CD14-positive monocyte (primary cell): ENCODE measurements at regions of chr4 and their contacts with region 1.

Region 1: GRCh38 chr4:86043755-86044592 is 315.9 kb downstream of the MAPK10 start:
- DNase-seq: peak; percentile 10 to 30 (median 23)
- H3K4me3 ChIP-seq: no peak overlapping the region
- H3K4me3 Mint-ChIP-seq: no peak overlapping the region
- H3K27ac ChIP-seq: no peak overlapping the region
- H3K27ac Mint-ChIP-seq: no peak overlapping the region
- H3K4me1 ChIP-seq: no peaks in the 10 kb centered on the region
- H3K4me1 Mint-ChIP-seq: no peaks in the 10 kb centered on the region
- H3K27me3 ChIP-seq: no peaks in the 10 kb centered on the region
- H3K27me3 Mint-ChIP-seq: no peaks in the 10 kb centered on the region
- CTCF ChIP-seq: peak; percentile 82

Region 2: DNA sequence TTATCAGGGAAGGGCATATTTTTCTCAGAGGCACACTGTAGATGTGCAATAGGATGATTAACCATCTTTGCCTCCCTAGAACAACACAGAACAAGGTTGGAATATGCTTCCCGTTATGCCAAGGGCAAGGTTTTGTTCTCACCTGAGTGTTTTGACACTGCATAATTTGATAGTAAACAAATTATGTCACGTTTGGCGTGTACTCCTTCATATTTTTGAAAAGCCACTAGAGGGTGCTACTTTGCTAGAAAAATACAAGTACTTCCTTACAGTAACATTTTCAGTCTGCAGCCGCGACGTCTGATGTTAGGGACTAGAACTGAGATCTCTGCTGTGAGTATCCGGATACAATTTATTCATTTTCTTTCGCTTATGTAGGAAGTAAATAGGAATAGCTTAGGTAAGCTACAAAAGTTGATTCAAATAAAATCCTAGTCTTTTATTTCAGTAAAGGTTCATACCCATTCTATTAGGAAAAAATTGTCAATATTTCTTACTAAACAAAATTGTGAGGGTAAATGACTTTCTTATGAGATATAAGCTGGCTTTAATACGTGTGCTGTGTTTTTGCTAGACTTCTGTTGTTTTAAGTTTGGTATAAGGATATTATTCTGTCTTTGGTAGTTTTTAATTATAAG is 896.4 kb before region 1 on chr4:
- intact Hi-C with region 1: loop called (anchors 10 kb)
- DNase-seq: peak; percentile 24 to 53 (median 43)
- H3K4me3 ChIP-seq: no peak overlapping the region
- H3K4me3 Mint-ChIP-seq: peak overlapping the region in 1 of 2 donors; percentile 31
- H3K27ac ChIP-seq: no peak overlapping the region
- H3K27ac Mint-ChIP-seq: no peak overlapping the region
- H3K4me1 ChIP-seq: no peaks in the 10 kb centered on the region
- H3K4me1 Mint-ChIP-seq: peaks cover 2% of the 10 kb centered on the region
- H3K27me3 ChIP-seq: peaks cover 0 to 2% of the 10 kb centered on the region in 2 donors
- H3K27me3 Mint-ChIP-seq: peaks cover 0 to 3% (median 2%) of the 10 kb centered on the region in 3 donors
- CTCF ChIP-seq: peak; percentile 80

Region 3: DNA sequence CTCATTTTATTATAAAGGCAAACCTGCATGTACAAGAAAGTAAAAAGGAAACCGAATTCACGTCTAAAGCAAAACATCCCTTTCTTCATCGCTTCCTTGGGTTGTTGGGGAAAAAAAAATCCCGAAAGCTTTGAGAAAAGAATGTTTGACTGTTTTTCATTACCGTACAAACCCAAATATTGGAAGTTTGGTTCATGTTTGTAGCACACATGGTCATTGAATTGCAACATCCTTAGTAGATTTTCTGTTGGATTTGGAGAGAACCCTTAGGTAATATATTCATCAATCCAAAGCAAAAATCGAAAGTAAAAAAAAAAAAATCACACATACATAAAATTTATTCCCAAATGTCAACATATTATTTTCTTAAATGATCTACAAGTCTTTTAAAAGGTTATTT is 104.4 kb before region 1 on chr4:
- intact Hi-C with region 1: no loop called
- DNase-seq: no peak
- H3K4me3 ChIP-seq: no peak overlapping the region
- H3K4me3 Mint-ChIP-seq: no peak overlapping the region
- H3K27ac ChIP-seq: no peak overlapping the region
- H3K27ac Mint-ChIP-seq: no peak overlapping the region
- H3K4me1 ChIP-seq: no peaks in the 10 kb centered on the region
- H3K4me1 Mint-ChIP-seq: no peaks in the 10 kb centered on the region
- H3K27me3 ChIP-seq: no peaks in the 10 kb centered on the region
- H3K27me3 Mint-ChIP-seq: peaks cover 0 to 5% (median 2%) of the 10 kb centered on the region in 3 donors
- CTCF ChIP-seq: no peak

Region 4: DNA sequence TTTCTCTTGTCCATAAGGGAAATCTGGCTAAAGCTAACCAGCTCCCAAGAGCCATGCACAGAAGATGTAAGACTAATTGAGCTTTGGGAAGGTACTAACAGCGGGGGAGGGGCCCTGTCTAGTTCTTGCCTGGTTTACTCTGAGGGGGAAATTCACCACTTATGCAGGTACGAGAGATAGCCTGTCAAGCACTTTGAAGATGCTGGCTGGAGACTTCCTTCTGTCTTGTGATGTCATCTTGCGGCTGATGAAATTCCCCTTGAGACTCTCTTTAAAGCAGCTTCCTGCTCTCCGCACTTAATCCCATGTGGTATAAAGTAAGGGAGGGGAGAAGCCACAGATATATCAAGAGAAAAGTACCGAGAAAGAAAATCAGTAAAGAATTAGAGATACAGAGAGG is 29.4 kb before region 1 on chr4:
- intact Hi-C with region 1: no loop called
- DNase-seq: no peak
- H3K4me3 ChIP-seq: no peak overlapping the region
- H3K4me3 Mint-ChIP-seq: no peak overlapping the region
- H3K27ac ChIP-seq: no peak overlapping the region
- H3K27ac Mint-ChIP-seq: no peak overlapping the region
- H3K4me1 ChIP-seq: no peaks in the 10 kb centered on the region
- H3K4me1 Mint-ChIP-seq: no peaks in the 10 kb centered on the region
- H3K27me3 ChIP-seq: no peaks in the 10 kb centered on the region
- H3K27me3 Mint-ChIP-seq: peaks cover 0 to 2% (median 0%) of the 10 kb centered on the region in 3 donors
- CTCF ChIP-seq: no peak